ENCODE measurements at regions of chr6 and their contacts with region 1.

Region 1: GRCh38 chr6:125749173-125749864 is at the start of gene HEY2:
- DNase-seq: peak; percentile 95
- ATAC-seq: peak; percentile 97 to 98
- total RNA-seq, gene HEY2: 2.1 to 2.5 TPM

Region 2: GRCh38 chr6:125314019-125314581 is 435.2 kb before region 1 on chr6:
- intact Hi-C with region 1: loop called in 1 of 2 experiments (anchors 5 kb)
- DNase-seq: peak; percentile 67
- ATAC-seq: peak; percentile 91

Region 3: DNA sequence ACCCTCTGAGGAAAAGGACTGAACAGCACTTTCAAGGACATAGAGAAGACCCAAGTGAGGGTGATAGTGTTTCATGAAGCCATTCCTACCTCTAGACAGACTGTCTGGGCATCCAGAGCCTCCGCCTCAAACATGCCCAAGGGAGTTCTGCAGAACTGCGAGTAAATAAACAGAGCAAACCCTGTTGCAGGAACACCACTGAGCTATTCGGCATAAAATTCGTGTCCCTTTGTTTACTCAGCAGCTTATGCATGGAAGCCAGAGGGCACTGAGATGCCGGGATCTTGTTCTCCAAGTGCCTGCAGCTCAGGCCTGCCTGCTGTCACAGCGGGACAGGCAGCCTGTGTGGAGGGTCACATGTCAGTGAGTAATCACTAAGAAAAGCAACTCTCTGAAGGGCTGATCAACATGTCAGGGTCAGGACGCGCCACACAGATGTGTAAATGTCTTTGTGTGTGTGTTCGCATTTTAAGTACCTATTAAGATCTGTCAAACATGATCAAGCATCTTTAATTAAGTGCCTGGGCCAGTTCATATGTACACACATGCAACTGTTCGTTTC is 164.8 kb before region 1 on chr6:
- intact Hi-C with region 1: loop called in 1 of 2 experiments (anchors 10 kb)
- DNase-seq: peak; percentile 21
- ATAC-seq: peak; percentile 53 to 61

Region 4: DNA sequence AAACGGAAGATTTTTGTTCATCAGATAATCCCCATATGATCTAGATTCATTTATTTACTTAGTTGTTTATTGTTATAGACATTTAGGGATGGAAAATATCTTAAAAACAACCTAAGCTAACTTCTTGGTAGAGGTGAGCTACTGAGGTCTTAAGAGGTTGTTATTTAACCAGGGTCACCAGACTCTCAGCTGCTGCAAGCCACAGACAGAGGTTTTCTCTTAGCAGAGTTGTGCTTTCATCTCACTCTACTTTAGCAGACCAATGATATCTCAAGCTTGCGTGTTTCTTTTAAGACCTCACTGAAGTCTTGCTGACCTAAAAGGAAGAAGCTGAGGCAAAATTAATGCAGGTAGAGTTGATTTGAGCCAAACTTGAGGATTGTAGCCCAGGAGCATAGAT is 85.0 kb after region 1 on chr6:
- intact Hi-C with region 1: no loop called
- DNase-seq: no peak
- ATAC-seq: no peak

Measured in left cardiac atrium (tissue), 4 donors.